B cell (primary cell): ENCODE measurements at regions of chr12 and their contacts with region 1.

Region 1: GRCh38 chr12:2794736-2795289 is at the start of gene FKBP4:
- DNase-seq: peak; percentile 91
- ATAC-seq: peak; percentile 85
- H3K4me3 ChIP-seq: peak within 1 kb of the TSS in 4 of 5 experiments; percentile 69 to 97 (median 80)
- H3K4me3 Mint-ChIP-seq: peak within 1 kb of the TSS; percentile 97
- H3K27ac ChIP-seq: peak within 1 kb of the TSS; percentile 58 to 71
- H3K27ac Mint-ChIP-seq: peak within 1 kb of the TSS; percentile 95
- H3K4me1 ChIP-seq: peaks cover 12 to 21% of the 10 kb centered on the region in 2 donors
- H3K4me1 Mint-ChIP-seq: peaks cover 24% of the 10 kb centered on the region
- H3K27me3 ChIP-seq: no peaks in the 10 kb centered on the region
- H3K27me3 Mint-ChIP-seq: no peaks in the 10 kb centered on the region
- CTCF ChIP-seq: no peak
- total RNA-seq, gene FKBP4: 56.7 and 57.5 TPM in 2 replicates

Region 2: GRCh38 chr12:1804545-1805332 is 990.1 kb before region 1 on chr12:
- CTCF ChIA-PET with region 1: no interaction called
- POLR2A ChIA-PET with region 1: no interaction called
- intact Hi-C with region 1: loop called (anchors 5 kb)
- DNase-seq: peak; percentile 89
- ATAC-seq: peak; percentile 78
- H3K4me3 ChIP-seq: peak overlapping the region in 1 of 5 experiments; percentile 21
- H3K4me3 Mint-ChIP-seq: peak overlapping the region; percentile 54
- H3K27ac ChIP-seq: peak overlapping the region in 1 of 2 donors; percentile 33
- H3K27ac Mint-ChIP-seq: peak overlapping the region; percentile 69
- H3K4me1 ChIP-seq: peaks cover 5 to 23% of the 10 kb centered on the region in 2 donors
- H3K4me1 Mint-ChIP-seq: peaks cover 25% of the 10 kb centered on the region
- H3K27me3 ChIP-seq: no peaks in the 10 kb centered on the region
- H3K27me3 Mint-ChIP-seq: no peaks in the 10 kb centered on the region
- CTCF ChIP-seq: no peak

Region 3: GRCh38 chr12:2691006-2691344 is 103.8 kb before region 1 on chr12:
- CTCF ChIA-PET with region 1: interaction called, 4 read pairs
- POLR2A ChIA-PET with region 1: interaction called, 4 read pairs
- intact Hi-C with region 1: loop called (anchors 5 kb)
- DNase-seq: peak; percentile 66
- ATAC-seq: peak; percentile 75
- H3K4me3 ChIP-seq: peak overlapping the region; percentile 42 to 78 (median 72)
- H3K4me3 Mint-ChIP-seq: peak overlapping the region; percentile 93
- H3K27ac ChIP-seq: peak overlapping the region in 1 of 2 donors; percentile 66
- H3K27ac Mint-ChIP-seq: peak overlapping the region; percentile 76
- H3K4me1 ChIP-seq: peaks cover 10 to 16% of the 10 kb centered on the region in 2 donors
- H3K4me1 Mint-ChIP-seq: peaks cover 29% of the 10 kb centered on the region
- H3K27me3 ChIP-seq: peaks cover 0 to 5% (median 2%) of the 10 kb centered on the region in 4 experiments
- H3K27me3 Mint-ChIP-seq: peaks cover 26% of the 10 kb centered on the region
- CTCF ChIP-seq: no peak

Region 4: DNA sequence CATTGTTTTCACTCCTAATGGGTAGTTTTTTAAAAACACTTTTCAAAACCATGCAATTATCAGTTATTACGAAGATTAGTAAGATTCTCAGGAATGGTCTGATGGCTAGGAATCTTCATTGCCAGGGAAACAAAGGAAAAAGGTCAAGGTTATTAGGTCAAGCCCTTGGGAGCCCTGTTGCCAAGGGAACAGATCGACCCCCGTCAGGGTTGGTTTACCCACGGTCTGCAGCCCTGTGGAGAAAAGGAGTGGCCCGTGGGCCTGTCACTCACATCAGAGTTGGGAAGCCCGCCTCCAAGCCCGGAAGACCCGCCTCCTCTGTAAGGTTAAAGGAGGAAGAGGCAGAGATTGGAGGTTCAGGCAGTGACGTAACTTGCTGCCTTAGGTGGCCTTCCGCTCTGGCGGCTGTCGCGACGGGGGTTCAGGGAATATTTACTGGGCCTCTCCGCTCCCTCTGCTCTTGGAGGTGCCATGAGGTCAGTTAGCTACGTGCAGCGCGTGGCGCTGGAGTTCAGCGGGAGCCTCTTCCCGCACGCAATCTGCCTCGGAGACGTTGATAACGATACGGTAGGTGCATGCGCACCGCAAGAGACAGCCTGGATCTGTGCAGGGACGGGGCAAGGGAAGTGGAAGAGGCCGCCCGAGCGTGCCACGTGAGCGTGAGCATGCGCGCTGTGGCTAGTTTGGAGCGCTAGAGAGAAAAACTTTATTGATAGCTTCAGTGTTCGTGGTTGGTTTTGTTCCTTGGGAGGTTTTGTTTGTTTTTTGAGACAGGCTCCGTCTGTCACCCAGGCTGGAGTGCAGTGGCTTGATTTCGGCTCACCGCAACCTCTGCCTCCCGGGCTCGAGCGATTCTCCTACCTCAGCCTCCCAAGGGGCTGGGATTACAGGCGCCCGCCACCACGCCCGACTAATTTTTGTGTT is 17.7 kb after region 1 on chr12 and contains the start of gene ITFG2:
- CTCF ChIA-PET with region 1: interaction called, 13 read pairs
- POLR2A ChIA-PET with region 1: interaction called, 17 read pairs
- intact Hi-C with region 1: loop called (anchors 1 kb)
- DNase-seq: peak; percentile 99
- ATAC-seq: peak; percentile 94
- H3K4me3 ChIP-seq: peak within 1 kb of the TSS; percentile 56 to 99 (median 87)
- H3K4me3 Mint-ChIP-seq: peak within 1 kb of the TSS; percentile 100
- H3K27ac ChIP-seq: peak within 1 kb of the TSS; percentile 79 to 90
- H3K27ac Mint-ChIP-seq: peak within 1 kb of the TSS; percentile 99
- H3K4me1 ChIP-seq: peaks cover 14 to 16% of the 10 kb centered on the region in 2 donors
- H3K4me1 Mint-ChIP-seq: peaks cover 32% of the 10 kb centered on the region
- H3K27me3 ChIP-seq: no peaks in the 10 kb centered on the region
- H3K27me3 Mint-ChIP-seq: no peaks in the 10 kb centered on the region
- CTCF ChIP-seq: no peak
- total RNA-seq, gene ITFG2: 137 and 145 TPM in 2 replicates

Region 5: DNA sequence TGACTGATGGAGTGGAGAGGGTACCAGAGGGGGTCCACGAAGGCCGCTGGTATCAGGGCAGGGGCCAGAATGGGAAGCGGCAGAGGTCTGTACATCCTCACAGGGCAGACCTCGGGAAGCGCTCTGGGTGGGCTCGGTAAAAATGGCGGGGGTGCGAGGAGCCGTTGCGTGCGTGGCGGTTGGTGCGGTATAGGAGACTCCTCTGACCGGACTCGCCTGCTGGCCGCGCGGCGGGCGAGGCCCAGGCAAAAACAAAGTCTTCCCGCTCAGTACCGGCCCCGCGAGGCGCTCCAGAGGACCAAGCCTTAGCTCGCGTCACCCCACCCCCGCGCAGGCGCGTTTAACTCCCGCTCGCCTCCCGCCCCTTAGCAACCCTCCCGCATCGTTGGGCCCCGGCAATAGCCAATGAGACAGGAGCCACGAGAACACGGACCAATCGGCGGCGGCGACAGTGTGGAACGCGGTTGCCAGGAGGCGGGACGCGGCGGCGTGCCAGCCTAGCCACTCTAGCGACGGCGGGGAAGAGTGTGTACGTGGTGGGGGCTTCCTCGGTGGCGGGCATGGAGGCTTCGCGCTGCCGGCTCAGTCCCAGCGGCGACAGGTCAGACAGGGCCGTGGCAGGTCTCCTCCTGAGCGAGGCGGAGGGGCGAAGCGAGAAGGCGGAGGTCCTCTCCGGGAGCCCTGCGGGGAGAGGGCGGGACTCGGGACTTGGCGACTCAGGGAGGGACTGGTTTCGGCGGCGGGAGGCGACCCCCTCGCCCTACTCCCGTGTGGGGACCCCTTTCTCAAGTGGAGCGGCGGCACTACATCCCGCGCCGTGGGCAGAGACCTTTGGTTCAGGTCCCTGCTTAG is 95.8 kb after region 1 on chr12 and contains the start of gene TULP3:
- CTCF ChIA-PET with region 1: interaction called, 3 read pairs
- POLR2A ChIA-PET with region 1: interaction called, 3 read pairs
- intact Hi-C with region 1: loop called (anchors 1 kb)
- DNase-seq: peak; percentile 98
- ATAC-seq: peak; percentile 98
- H3K4me3 ChIP-seq: peak within 1 kb of the TSS; percentile 65 to 99 (median 85)
- H3K4me3 Mint-ChIP-seq: peak within 1 kb of the TSS; percentile 94
- H3K27ac ChIP-seq: peak within 1 kb of the TSS; percentile 60 to 89
- H3K27ac Mint-ChIP-seq: peak within 1 kb of the TSS; percentile 93
- H3K4me1 ChIP-seq: peaks cover 5 to 12% of the 10 kb centered on the region in 2 donors
- H3K4me1 Mint-ChIP-seq: peaks cover 26% of the 10 kb centered on the region
- H3K27me3 ChIP-seq: no peaks in the 10 kb centered on the region
- H3K27me3 Mint-ChIP-seq: no peaks in the 10 kb centered on the region
- CTCF ChIP-seq: no peak
- total RNA-seq, gene TULP3: 8.1 and 8.3 TPM in 2 replicates